ENCODE measurements at regions of chr16 and their contacts with region 1.

Region 1: DNA sequence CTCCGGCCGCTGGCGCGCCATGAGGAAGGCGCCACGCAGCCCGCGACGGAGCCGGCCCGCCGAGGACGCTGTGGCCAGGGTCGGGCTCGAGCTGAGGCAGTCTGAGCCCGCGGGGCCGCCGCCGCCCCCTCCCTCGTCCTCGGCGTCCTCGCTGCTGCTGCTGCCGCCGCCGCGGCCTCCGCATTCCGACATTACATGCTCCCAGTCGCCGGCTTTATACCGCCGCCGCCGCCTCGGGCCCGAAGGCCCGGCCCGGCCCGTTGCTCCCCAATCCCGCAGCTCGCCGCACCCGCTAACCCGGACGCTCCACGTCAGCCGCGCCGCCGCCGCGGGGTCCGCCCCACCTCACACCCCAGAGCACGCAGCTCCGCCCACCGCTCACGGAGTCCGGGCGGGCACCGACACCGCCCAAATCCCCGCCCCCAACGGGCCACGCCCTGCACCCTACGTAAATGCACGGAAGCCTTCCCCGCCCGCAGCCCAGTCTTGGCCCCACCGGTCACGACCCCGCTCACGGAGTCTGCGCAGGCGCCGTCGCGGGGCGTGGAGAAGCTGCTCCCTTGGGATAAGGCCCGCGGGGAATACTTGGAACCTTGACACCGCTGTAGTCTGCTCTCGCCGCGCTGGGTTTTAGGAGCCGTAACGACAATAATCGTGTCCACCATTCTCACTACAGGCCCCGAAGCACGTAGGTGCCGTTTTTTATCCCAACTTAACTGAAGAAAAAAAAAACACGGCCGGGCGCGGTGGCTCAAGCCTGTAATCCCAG is at the start of gene TXNDC11:
- DNase-seq: peak; percentile 99
- ATAC-seq: peak; percentile 95
- H3K4me3 Mint-ChIP-seq: peak within 1 kb of the TSS; percentile 88
- H3K27ac Mint-ChIP-seq: peak within 1 kb of the TSS; percentile 95
- H3K4me1 Mint-ChIP-seq: peaks cover 44% of the 10 kb centered on the region
- H3K27me3 Mint-ChIP-seq: no peaks in the 10 kb centered on the region
- CTCF ChIP-seq: no peak
- total RNA-seq, gene TXNDC11: 21.7 to 24.4 TPM

Region 2: DNA sequence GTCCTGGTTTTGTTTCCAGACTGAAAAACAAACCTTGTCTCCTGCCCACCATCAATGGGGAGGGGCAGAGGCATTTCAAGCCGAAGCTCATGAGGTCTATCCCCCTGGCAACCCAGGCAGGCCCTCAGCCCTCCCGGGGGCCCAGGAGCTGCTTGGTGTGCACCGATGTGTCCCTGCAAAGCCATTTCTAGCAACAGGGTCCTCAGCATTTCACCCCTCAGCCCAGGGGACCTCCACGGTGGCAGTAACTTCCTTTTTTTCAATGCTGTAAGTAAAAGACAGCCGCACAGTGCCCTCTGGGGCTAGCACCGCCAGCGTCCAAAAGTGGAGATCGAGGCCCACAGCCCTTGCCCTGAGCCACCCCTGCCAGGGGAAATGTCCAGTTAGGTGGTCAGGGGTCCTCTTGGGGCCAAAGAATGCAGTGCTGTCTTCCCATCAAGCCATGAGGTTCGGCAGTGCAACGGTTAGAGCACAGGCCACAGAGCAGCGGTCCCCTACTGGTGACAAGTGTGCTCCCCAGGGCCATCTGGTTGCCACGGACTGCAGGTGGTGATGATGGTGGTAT is 235.9 kb before region 1 on chr16:
- CTCF ChIA-PET with region 1: no interaction called
- POLR2A ChIA-PET with region 1: no interaction called
- intact Hi-C with region 1: no loop called
- DNase-seq: no peak
- ATAC-seq: no peak
- H3K4me3 Mint-ChIP-seq: no peak overlapping the region
- H3K27ac Mint-ChIP-seq: no peak overlapping the region
- H3K4me1 Mint-ChIP-seq: no peaks in the 10 kb centered on the region
- H3K27me3 Mint-ChIP-seq: no peaks in the 10 kb centered on the region
- CTCF ChIP-seq: no peak

Region 3: GRCh38 chr16:11629071-11629962 is 113.4 kb before region 1 on chr16:
- CTCF ChIA-PET with region 1: no interaction called
- POLR2A ChIA-PET with region 1: no interaction called
- intact Hi-C with region 1: no loop called
- DNase-seq: peak; percentile 28
- ATAC-seq: peak; percentile 40
- H3K4me3 Mint-ChIP-seq: no peak overlapping the region
- H3K27ac Mint-ChIP-seq: peak overlapping the region; percentile 58
- H3K4me1 Mint-ChIP-seq: peaks cover 43% of the 10 kb centered on the region
- H3K27me3 Mint-ChIP-seq: no peaks in the 10 kb centered on the region
- CTCF ChIP-seq: no peak

Region 4: GRCh38 chr16:11797166-11797956 is 54.6 kb after region 1 on chr16 and contains the start of gene ZC3H7A:
- CTCF ChIA-PET with region 1: interaction called, 31 read pairs
- POLR2A ChIA-PET with region 1: interaction called, 48 read pairs
- intact Hi-C with region 1: loop called (anchors 5 kb)
- DNase-seq: peak; percentile 95
- ATAC-seq: peak; percentile 98
- H3K4me3 Mint-ChIP-seq: peak within 1 kb of the TSS; percentile 89
- H3K27ac Mint-ChIP-seq: peak within 1 kb of the TSS; percentile 96
- H3K4me1 Mint-ChIP-seq: peaks cover 61% of the 10 kb centered on the region
- H3K27me3 Mint-ChIP-seq: no peaks in the 10 kb centered on the region
- CTCF ChIP-seq: peak; percentile 74
- total RNA-seq, gene ZC3H7A: 62.3 to 67.8 TPM

Region 5: DNA sequence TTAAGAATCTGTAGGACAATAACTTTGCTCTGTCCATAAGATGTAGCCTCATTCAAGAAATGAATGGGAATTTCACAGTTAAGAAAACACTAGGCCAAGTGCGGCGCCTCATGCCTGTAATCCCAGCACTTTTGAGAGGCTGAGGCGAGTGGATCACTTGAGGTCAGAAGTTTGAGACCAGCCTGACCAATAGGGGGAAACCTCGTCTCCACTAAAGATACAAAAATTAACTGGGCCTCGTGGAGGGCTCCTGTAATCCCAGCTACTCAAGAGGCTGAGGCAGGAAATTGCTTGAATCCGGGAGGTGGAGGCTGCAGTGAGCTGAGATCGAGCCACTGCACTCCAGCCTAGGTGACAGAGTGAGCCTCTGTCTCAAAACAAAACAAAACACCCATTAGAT is 128.5 kb after region 1 on chr16:
- CTCF ChIA-PET with region 1: no interaction called
- POLR2A ChIA-PET with region 1: no interaction called
- intact Hi-C with region 1: no loop called
- DNase-seq: no peak
- ATAC-seq: no peak
- H3K4me3 Mint-ChIP-seq: no peak overlapping the region
- H3K27ac Mint-ChIP-seq: peak overlapping the region; percentile 38
- H3K4me1 Mint-ChIP-seq: peaks cover 4% of the 10 kb centered on the region
- H3K27me3 Mint-ChIP-seq: no peaks in the 10 kb centered on the region
- CTCF ChIP-seq: no peak

Region 6: DNA sequence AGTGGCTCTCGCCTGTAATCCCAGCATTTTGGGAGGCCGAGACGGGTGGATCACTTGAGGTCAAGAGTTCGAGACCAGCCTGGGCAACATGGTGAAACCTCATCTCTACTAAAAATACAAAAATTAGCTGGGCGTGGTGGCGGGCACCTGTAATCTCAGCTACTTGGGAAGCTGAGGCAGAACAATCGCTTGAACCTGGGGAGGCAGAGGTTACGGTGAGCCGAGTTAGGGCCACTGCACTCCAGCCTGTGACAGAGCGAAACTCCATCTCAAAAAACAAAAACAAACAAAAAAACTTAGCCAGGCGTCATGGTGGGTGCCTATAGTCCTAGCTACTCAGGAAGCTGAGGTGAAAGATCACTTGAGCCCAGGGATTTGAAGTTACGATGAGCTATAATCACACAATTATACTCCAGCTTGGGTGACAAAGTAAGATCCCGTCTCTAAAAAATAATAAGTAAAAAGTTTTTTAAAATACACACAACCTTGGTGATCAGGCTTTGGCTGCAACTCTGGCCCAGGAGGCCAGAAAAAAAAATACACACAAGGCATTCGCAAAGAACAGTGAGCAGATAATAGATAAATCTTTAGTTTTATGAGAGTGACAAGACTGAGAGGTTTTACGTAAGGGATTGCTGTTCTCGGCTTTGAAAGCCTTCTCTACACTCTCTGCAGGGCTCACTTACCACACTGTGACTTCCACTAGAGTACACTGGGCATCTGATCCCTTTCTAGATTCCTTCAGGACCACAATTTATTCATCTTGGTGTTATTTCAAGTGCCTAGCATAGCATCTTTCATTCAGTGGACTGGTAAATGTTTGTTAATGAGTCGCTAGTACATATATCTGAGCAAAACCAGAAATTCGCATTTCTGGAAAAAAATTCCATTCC is 167.2 kb after region 1 on chr16:
- CTCF ChIA-PET with region 1: no interaction called
- POLR2A ChIA-PET with region 1: no interaction called
- intact Hi-C with region 1: no loop called
- DNase-seq: no peak
- ATAC-seq: no peak
- H3K4me3 Mint-ChIP-seq: no peak overlapping the region
- H3K27ac Mint-ChIP-seq: peak overlapping the region; percentile 42
- H3K4me1 Mint-ChIP-seq: peaks cover 67% of the 10 kb centered on the region
- H3K27me3 Mint-ChIP-seq: no peaks in the 10 kb centered on the region
- CTCF ChIP-seq: no peak